ENCODE measurements at regions of chr10 and their contacts with region 1.

Region 1: GRCh38 chr10:96794866-96795733 is 37.0 kb upstream of the LCOR start:
- DNase-seq: peak; percentile 42 to 75
- H3K4me3 ChIP-seq: no peak overlapping the region
- H3K4me3 Mint-ChIP-seq: peak overlapping the region; percentile 8
- H3K27ac Mint-ChIP-seq: peak overlapping the region; percentile 56
- H3K4me1 ChIP-seq: peaks cover 49% of the 10 kb centered on the region
- H3K4me1 Mint-ChIP-seq: peaks cover 15% of the 10 kb centered on the region
- H3K27me3 ChIP-seq: no peaks in the 10 kb centered on the region
- H3K27me3 Mint-ChIP-seq: no peaks in the 10 kb centered on the region
- CTCF ChIP-seq: no peak

Region 2: DNA sequence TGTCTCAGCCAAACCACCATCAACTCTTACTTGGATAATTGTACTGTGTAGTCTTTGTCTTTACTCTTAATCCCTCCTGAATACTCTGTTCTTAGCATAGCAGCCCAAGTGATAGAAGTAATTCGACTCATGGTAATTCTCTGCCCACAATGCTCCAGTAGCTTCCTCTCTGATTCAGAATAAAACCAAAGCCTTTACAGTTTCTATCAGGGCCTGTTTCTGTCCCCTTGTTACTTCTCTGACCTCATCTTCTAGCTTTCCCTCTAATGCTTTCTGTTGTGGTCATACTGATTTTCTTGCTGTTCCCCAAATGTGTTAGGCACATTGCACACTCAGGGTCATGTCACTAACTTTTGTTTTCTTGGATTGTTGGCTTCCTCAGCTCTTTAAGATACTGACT is 657.0 kb before region 1 on chr10:
- CTCF ChIA-PET with region 1: no interaction called
- POLR2A ChIA-PET with region 1: no interaction called
- intact Hi-C with region 1: no loop called
- DNase-seq: no peak
- H3K4me3 ChIP-seq: no peak overlapping the region
- H3K4me3 Mint-ChIP-seq: no peak overlapping the region
- H3K27ac Mint-ChIP-seq: no peak overlapping the region
- H3K4me1 ChIP-seq: no peaks in the 10 kb centered on the region
- H3K4me1 Mint-ChIP-seq: no peaks in the 10 kb centered on the region
- H3K27me3 ChIP-seq: no peaks in the 10 kb centered on the region
- H3K27me3 Mint-ChIP-seq: no peaks in the 10 kb centered on the region
- CTCF ChIP-seq: no peak

Region 3: DNA sequence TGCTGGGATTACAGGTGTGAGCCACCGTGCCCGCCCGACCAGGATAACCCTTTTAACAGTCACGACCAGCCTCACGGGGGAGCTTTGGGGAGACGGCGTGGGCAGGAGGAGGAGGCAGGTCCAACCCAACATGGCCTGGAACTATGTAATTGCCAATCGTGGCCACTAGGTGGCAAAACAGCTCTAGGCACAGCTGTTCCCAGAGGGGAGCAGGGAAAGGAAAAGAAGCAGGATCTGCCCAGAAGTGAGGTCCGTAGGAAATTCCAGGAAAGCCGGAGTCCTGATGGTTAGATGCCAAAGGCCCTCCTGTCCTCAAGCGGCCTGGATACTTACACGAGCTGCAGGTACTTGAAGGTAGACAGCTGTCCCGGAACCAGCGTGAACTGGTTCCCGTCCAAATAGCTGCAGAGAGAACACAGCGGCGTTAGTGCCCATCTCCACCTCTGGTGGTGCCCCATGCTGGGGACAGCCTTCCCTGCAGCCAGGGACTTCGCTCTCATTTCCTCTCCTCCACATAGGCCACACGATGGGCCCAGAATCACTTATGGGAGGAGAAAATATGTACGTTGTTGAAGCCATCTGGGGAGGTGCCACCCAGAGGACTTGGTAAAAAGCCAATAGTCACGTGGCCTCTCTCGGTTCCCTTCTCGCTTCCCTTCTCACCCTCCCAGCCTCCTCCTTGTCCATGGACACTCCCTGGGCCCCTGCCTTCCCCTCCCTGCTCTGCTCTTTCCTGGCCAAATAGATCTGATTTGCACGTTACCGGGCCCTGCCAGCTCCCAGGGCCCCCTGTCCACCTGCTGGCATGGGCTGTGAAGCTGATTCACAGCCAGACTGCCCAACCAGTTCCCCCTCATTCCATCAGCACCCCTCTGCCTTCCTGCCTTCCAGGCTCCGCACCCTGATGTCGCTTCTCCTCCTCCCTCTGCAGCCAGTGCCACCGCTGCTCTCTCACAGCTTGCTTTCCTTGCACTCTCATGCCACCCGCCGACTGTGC is 242.6 kb after region 1 on chr10:
- CTCF ChIA-PET with region 1: interaction called, 11 read pairs
- POLR2A ChIA-PET with region 1: no interaction called
- intact Hi-C with region 1: no loop called
- DNase-seq: peak; percentile 82 to 85
- H3K4me3 ChIP-seq: no peak overlapping the region
- H3K4me3 Mint-ChIP-seq: no peak overlapping the region
- H3K27ac Mint-ChIP-seq: no peak overlapping the region
- H3K4me1 ChIP-seq: peaks cover 2% of the 10 kb centered on the region; the same call in 1 of the 2 replicates
- H3K4me1 Mint-ChIP-seq: no peaks in the 10 kb centered on the region
- H3K27me3 ChIP-seq: no peaks in the 10 kb centered on the region
- H3K27me3 Mint-ChIP-seq: peaks cover 13% of the 10 kb centered on the region
- CTCF ChIP-seq: peak; percentile 84 to 91

Region 4: GRCh38 chr10:97311227-97311626 is 516.1 kb after region 1 on chr10:
- CTCF ChIA-PET with region 1: no interaction called
- POLR2A ChIA-PET with region 1: no interaction called
- intact Hi-C with region 1: no loop called
- DNase-seq: no peak
- H3K4me3 ChIP-seq: no peak overlapping the region
- H3K4me3 Mint-ChIP-seq: no peak overlapping the region
- H3K27ac Mint-ChIP-seq: no peak overlapping the region
- H3K4me1 ChIP-seq: no peaks in the 10 kb centered on the region
- H3K4me1 Mint-ChIP-seq: no peaks in the 10 kb centered on the region
- H3K27me3 ChIP-seq: no peaks in the 10 kb centered on the region
- H3K27me3 Mint-ChIP-seq: no peaks in the 10 kb centered on the region
- CTCF ChIP-seq: no peak